Heart right ventricle (tissue), 16 donors: ENCODE measurements at regions of chr7 and their contacts with region 1.

Region 1: DNA sequence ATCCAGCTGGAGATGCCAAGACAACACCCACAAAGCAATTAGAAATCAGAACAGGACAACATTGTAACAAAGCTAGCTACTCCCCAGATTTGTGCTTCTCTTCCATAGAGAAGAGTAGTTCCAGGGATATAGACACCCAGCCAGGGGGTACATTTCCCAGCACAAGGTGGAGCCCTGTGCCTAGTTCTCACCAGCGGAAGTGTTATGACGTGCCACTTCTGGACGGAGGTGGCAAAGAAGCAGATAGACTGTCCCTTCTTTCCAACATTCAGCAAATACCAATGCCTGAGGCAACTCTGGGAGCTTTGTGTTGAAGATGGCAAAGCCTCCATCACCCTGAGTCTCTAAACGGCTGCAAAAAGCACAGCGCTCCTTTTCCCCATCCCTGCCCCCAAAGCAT is 23.4 kb upstream of the GSAP start:
- DNase-seq: peak in 1 of 2 donors; percentile 48
- ATAC-seq: peak in 7 of 8 donors; percentile 64 to 94 (median 85)
- H3K4me3 ChIP-seq: no peak overlapping the region
- H3K27ac ChIP-seq: no peak overlapping the region
- H3K4me1 ChIP-seq: peaks cover 0 to 22% (median 0%) of the 10 kb centered on the region in 9 donors
- H3K27me3 ChIP-seq: no peaks in the 10 kb centered on the region
- CTCF ChIP-seq: peak in 8 of 9 donors; percentile 33 to 67 (median 45)

Region 2: GRCh38 chr7:77587272-77587671 is 147.7 kb after region 1 on chr7:
- intact Hi-C with region 1: loop called in 1 of 10 experiments (anchors 10 kb)
- DNase-seq: no peak
- ATAC-seq: peak in 1 of 8 donors; percentile 38
- H3K4me3 ChIP-seq: no peak overlapping the region
- H3K27ac ChIP-seq: no peak overlapping the region
- H3K4me1 ChIP-seq: peaks cover 0 to 26% (median 12%) of the 10 kb centered on the region in 9 donors
- H3K27me3 ChIP-seq: no peaks in the 10 kb centered on the region
- CTCF ChIP-seq: no peak

Region 3: GRCh38 chr7:77606562-77606961 is 167.0 kb after region 1 on chr7:
- intact Hi-C with region 1: loop called in 2 of 10 experiments (anchors 10 kb)
- DNase-seq: no peak
- ATAC-seq: no peak
- H3K4me3 ChIP-seq: no peak overlapping the region
- H3K27ac ChIP-seq: no peak overlapping the region
- H3K4me1 ChIP-seq: no peaks in the 10 kb centered on the region
- H3K27me3 ChIP-seq: no peaks in the 10 kb centered on the region
- CTCF ChIP-seq: no peak

Region 4: DNA sequence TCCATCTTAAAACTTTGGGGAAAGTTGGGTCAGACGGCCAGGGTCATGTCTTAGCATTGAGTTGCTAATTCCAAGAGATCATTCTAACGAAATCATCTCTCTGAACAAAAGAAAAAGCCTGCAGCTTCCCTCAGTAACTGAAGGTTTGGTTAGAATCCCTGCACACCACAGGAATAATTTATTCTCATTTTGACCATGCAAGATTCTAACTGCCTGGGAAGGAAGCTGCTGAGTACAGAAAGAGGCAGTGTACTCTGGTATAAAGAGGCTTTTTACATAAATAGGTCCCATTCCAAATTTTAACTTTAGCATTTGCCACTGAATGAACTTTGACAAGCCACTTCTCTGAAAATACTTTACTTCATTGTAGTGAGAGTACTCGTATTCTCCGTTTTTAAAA is 179.7 kb after region 1 on chr7:
- intact Hi-C with region 1: loop called in 1 of 10 experiments (anchors 10 kb)
- DNase-seq: no peak
- ATAC-seq: no peak
- H3K4me3 ChIP-seq: no peak overlapping the region
- H3K27ac ChIP-seq: no peak overlapping the region
- H3K4me1 ChIP-seq: peaks cover 0 to 9% (median 0%) of the 10 kb centered on the region in 9 donors
- H3K27me3 ChIP-seq: no peaks in the 10 kb centered on the region
- CTCF ChIP-seq: no peak

Region 5: GRCh38 chr7:77651573-77652162 is 212.1 kb after region 1 on chr7:
- intact Hi-C with region 1: loop called in 1 of 10 experiments (anchors 10 kb)
- DNase-seq: peak in 1 of 2 donors; percentile 21
- ATAC-seq: peak in 1 of 8 donors; percentile 34
- H3K4me3 ChIP-seq: no peak overlapping the region
- H3K27ac ChIP-seq: no peak overlapping the region
- H3K4me1 ChIP-seq: peaks cover 0 to 6% (median 0%) of the 10 kb centered on the region in 9 donors
- H3K27me3 ChIP-seq: no peaks in the 10 kb centered on the region
- CTCF ChIP-seq: peak; percentile 58 to 83 (median 77)

Region 6: DNA sequence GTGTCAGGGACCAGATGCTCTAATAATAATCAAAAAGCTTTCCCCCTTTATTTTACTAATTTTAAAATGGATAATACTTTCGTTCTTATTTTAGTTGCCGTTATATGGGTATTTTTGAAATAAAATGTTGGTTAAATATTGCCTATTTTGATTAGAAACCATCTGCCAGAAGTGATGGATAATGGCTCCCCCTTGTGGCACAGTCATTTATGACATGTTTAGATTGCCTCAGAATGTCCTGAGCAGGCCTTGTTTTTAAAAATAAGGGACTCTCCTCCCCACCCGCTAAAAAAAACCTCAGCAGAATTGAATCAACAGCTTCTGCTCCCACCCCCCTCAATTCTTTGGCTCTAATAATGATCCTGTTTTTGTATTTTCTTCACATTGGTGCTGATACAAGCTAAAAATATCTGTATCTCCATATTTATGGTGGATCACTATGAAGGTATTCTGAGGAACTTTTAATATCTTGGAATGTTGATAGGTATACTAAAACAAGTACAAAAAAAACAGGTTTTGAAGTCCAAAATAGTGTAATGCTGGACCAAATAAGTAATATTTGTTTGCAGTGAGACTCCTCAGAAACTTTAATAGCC is 319.8 kb after region 1 on chr7:
- intact Hi-C with region 1: loop called in 2 of 10 experiments (anchors 10 kb)
- DNase-seq: peak in 1 of 2 donors; percentile 73
- ATAC-seq: peak in 6 of 8 donors; percentile 33 to 84 (median 76)
- H3K4me3 ChIP-seq: no peak overlapping the region
- H3K27ac ChIP-seq: peak overlapping the region in 1 of 10 donors; percentile 13
- H3K4me1 ChIP-seq: peaks cover 0 to 23% (median 15%) of the 10 kb centered on the region in 9 donors
- H3K27me3 ChIP-seq: no peaks in the 10 kb centered on the region
- CTCF ChIP-seq: peak; percentile 67 to 89 (median 84)

Region 7: DNA sequence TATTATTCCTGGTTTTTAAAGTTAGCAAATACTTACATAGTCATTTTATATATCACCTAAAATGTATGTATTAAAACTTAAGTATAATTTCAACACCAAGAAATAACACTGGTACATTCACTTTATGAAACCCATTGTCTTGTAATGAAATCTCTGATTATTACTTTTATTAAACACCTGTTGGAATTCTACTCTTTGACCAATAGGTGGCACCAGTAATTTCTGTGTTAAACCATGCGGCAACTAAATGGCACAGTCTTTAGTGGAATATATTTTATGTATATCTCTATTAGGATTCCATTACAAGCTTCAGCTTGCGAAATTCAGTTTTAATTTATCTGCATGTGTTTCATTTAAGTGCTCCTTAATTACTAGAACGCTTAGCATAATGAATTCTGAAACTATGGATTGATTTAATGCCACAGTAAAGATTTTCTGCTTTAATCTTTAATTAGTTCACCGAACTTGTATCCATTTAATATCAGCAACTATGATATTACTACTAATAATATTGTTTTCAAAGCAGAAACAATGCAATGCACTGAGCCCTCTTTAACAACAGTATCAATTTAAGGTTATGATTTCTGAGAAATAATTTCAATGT is 1832.6 kb after region 1 on chr7:
- intact Hi-C with region 1: loop called in 1 of 10 experiments (anchors 5 kb)
- DNase-seq: no peak
- ATAC-seq: no peak
- H3K4me3 ChIP-seq: no peak overlapping the region
- H3K27ac ChIP-seq: no peak overlapping the region
- H3K4me1 ChIP-seq: no peaks in the 10 kb centered on the region
- H3K27me3 ChIP-seq: no peaks in the 10 kb centered on the region
- CTCF ChIP-seq: peak; percentile 25 to 77 (median 62)